ENCODE measurements at regions of chr13 and their contacts with region 1.

Region 1: GRCh38 chr13:41054212-41054877 is 7.0 kb upstream of the WBP4 start:
- DNase-seq: peak in 27 of 35 experiments; percentile 7 to 79 (median 31)
- ATAC-seq: peak; percentile 70 to 79 (median 75)
- H3K4me3 ChIP-seq: no peak overlapping the region
- H3K4me3 Mint-ChIP-seq: peak overlapping the region in 1 of 3 donors; percentile 8
- H3K27ac ChIP-seq: no peak overlapping the region
- H3K27ac Mint-ChIP-seq: peak overlapping the region in 1 of 2 donors; percentile 77
- H3K4me1 ChIP-seq: peaks cover 4 to 9% of the 10 kb centered on the region in 2 experiments
- H3K4me1 Mint-ChIP-seq: peaks cover 52 to 59% (median 54%) of the 10 kb centered on the region in 3 donors
- H3K27me3 ChIP-seq: no peaks in the 10 kb centered on the region
- H3K27me3 Mint-ChIP-seq: no peaks in the 10 kb centered on the region

Region 2: GRCh38 chr13:39567569-39567968 is 1486.8 kb before region 1 on chr13:
- CTCF ChIA-PET with region 1: no interaction called
- POLR2A ChIA-PET with region 1: interaction called in 1 of 2 experiments, 11 read pairs
- DNase-seq: no peak
- ATAC-seq: no peak
- H3K4me3 ChIP-seq: no peak overlapping the region
- H3K4me3 Mint-ChIP-seq: no peak overlapping the region
- H3K27ac ChIP-seq: no peak overlapping the region
- H3K27ac Mint-ChIP-seq: no peak overlapping the region
- H3K4me1 ChIP-seq: no peaks in the 10 kb centered on the region
- H3K4me1 Mint-ChIP-seq: no peaks in the 10 kb centered on the region
- H3K27me3 ChIP-seq: peaks cover 0 to 8% of the 10 kb centered on the region in 2 experiments
- H3K27me3 Mint-ChIP-seq: peaks cover 18 to 28% of the 10 kb centered on the region in 2 donors

Measured in T-cell (primary cell).